BJ (cell line): ENCODE measurements at regions of chr6 and their contacts with region 1.

Region 1: GRCh38 chr6:5457041-5457440 is 195.7 kb downstream of the FARS2 start:
- DNase-seq: no peak
- H3K4me3 ChIP-seq: no peak overlapping the region
- H3K27me3 ChIP-seq: no peaks in the 10 kb centered on the region
- CTCF ChIP-seq: no peak

Region 2: GRCh38 chr6:5073992-5074391 is 383.0 kb before region 1 on chr6:
- CTCF ChIA-PET with region 1: no interaction called
- POLR2A ChIA-PET with region 1: interaction called, 11 read pairs
- DNase-seq: no peak
- H3K4me3 ChIP-seq: no peak overlapping the region
- H3K27me3 ChIP-seq: no peaks in the 10 kb centered on the region
- CTCF ChIP-seq: no peak

Region 3: GRCh38 chr6:5229356-5229755 is 227.7 kb before region 1 on chr6:
- CTCF ChIA-PET with region 1: no interaction called
- POLR2A ChIA-PET with region 1: interaction called, 11 read pairs
- DNase-seq: no peak
- H3K4me3 ChIP-seq: no peak overlapping the region
- H3K27me3 ChIP-seq: no peaks in the 10 kb centered on the region
- CTCF ChIP-seq: no peak